PC-9 (cell line): ENCODE measurements at regions of chr19 and their contacts with region 1.

Region 1: GRCh38 chr19:46542428-46543230 is 47.0 kb upstream of the PNMA8B start:
- DNase-seq: peak; percentile 79 to 81
- H3K4me3 ChIP-seq: no peak overlapping the region
- H3K27ac ChIP-seq: no peak overlapping the region
- H3K4me1 ChIP-seq: peaks cover 4% of the 10 kb centered on the region
- H3K27me3 ChIP-seq: no peaks in the 10 kb centered on the region
- CTCF ChIP-seq: peak; percentile 97

Region 2: GRCh38 chr19:46021531-46022041 is 521.0 kb before region 1 on chr19:
- CTCF ChIA-PET with region 1: interaction called, 14 read pairs
- POLR2A ChIA-PET with region 1: no interaction called
- intact Hi-C with region 1: no loop called
- DNase-seq: no peak
- H3K4me3 ChIP-seq: no peak overlapping the region
- H3K27ac ChIP-seq: no peak overlapping the region
- H3K4me1 ChIP-seq: no peaks in the 10 kb centered on the region
- H3K27me3 ChIP-seq: no peaks in the 10 kb centered on the region
- CTCF ChIP-seq: no peak

Region 3: DNA sequence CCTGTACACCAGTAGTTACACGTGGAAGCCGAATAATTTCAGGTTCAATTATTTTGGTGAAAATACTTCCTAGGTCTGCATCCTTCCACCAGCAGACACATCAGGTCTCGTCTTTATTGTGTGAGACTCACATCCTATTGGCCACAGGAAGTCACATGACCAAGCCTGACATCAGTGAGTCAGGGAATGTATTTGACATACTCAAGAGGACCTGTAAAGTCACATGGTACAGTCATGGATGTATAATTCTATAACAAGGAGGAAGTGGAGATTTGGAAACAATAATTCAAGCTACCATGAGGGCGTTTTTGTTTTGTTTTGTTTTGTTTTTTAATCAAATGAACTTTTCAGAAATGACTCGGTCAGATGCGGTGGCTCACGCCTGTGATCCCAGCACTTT is 255.0 kb before region 1 on chr19:
- CTCF ChIA-PET with region 1: interaction called, 4 read pairs
- POLR2A ChIA-PET with region 1: no interaction called
- intact Hi-C with region 1: loop called (anchors 1 kb)
- DNase-seq: peak in 1 of 2 experiments; percentile 43
- H3K4me3 ChIP-seq: no peak overlapping the region
- H3K27ac ChIP-seq: no peak overlapping the region
- H3K4me1 ChIP-seq: peaks cover 12% of the 10 kb centered on the region; the same call in 1 of the 2 replicates
- H3K27me3 ChIP-seq: peaks cover 7% of the 10 kb centered on the region; the same call in 1 of the 2 replicates
- CTCF ChIP-seq: no peak

Region 4: DNA sequence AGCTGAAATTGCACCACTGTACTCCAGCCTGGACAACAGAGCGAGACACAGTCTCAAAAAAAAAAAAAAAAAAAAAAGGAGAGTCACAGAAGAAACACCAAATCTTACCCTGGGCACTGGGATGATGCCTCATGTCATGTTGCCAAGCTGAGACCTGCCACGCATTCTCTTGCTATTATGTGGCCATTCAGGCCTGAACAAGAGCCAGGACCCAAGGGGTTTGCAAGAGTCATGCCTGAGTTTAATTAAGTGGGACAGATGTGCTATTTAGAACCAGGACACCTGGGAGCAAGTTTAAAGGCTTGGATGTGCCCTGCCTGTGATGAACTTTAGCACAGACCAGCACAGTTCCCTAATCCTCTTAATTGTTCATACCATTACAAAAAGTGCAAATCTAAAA is 81.1 kb before region 1 on chr19:
- CTCF ChIA-PET with region 1: no interaction called
- POLR2A ChIA-PET with region 1: no interaction called
- intact Hi-C with region 1: no loop called
- DNase-seq: no peak
- H3K4me3 ChIP-seq: no peak overlapping the region
- H3K27ac ChIP-seq: no peak overlapping the region
- H3K4me1 ChIP-seq: 0 out of 2 replicates have a peak, but pooled peaks cover 1% of the 10 kb centered on the region
- H3K27me3 ChIP-seq: peaks cover 91% of the 10 kb centered on the region
- CTCF ChIP-seq: no peak

Region 5: GRCh38 chr19:46513461-46514236 is 29.0 kb before region 1 on chr19:
- CTCF ChIA-PET with region 1: interaction called, 5 read pairs
- POLR2A ChIA-PET with region 1: no interaction called
- intact Hi-C with region 1: loop called (anchors 1 kb)
- DNase-seq: peak; percentile 51 to 76
- H3K4me3 ChIP-seq: no peak overlapping the region
- H3K27ac ChIP-seq: no peak overlapping the region
- H3K4me1 ChIP-seq: no peaks in the 10 kb centered on the region; the same call in 1 of the 2 replicates
- H3K27me3 ChIP-seq: peaks cover 6% of the 10 kb centered on the region; the same call in 1 of the 2 replicates
- CTCF ChIP-seq: peak; percentile 98

Region 6: DNA sequence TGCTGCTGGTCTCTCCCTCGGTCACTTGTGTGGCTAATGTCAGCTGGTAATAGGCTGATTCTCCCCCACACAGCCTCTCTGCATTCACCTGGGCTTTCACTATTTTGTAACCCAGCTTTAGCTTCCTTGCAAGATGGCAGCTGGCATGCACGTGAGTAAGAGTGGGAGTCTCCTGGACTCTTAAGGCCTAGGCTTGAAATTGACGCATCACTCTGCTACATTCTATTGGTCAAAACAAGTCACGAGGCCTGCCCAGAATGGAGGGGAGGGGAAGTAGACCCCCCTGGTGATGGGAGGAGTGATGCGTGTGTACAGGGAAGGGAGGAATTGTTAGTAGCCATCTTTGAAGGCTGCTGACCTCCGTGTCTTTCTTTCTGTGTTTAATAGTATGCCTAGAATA is 22.0 kb before region 1 on chr19:
- CTCF ChIA-PET with region 1: interaction called, 17 read pairs
- POLR2A ChIA-PET with region 1: no interaction called
- intact Hi-C with region 1: loop called (anchors 1 kb)
- DNase-seq: no peak
- H3K4me3 ChIP-seq: no peak overlapping the region
- H3K27ac ChIP-seq: no peak overlapping the region
- H3K4me1 ChIP-seq: no peaks in the 10 kb centered on the region
- H3K27me3 ChIP-seq: no peaks in the 10 kb centered on the region; the same call in 1 of the 2 replicates
- CTCF ChIP-seq: no peak